IMR-90 (cell line): ENCODE measurements at regions of chr6 and their contacts with region 1.

Region 1: GRCh38 chr6:143928853-143929252 is 64.6 kb downstream of the ZC2HC1B start:
- DNase-seq: no peak
- ATAC-seq: no peak
- H3K4me3 ChIP-seq: no peak overlapping the region
- H3K27ac ChIP-seq: no peak overlapping the region
- H3K4me1 ChIP-seq: no peaks in the 10 kb centered on the region
- H3K27me3 ChIP-seq: no peaks in the 10 kb centered on the region
- CTCF ChIP-seq: no peak
- POLR2A ChIP-seq: no peak
- RAD21 ChIP-seq: no peak

Region 2: DNA sequence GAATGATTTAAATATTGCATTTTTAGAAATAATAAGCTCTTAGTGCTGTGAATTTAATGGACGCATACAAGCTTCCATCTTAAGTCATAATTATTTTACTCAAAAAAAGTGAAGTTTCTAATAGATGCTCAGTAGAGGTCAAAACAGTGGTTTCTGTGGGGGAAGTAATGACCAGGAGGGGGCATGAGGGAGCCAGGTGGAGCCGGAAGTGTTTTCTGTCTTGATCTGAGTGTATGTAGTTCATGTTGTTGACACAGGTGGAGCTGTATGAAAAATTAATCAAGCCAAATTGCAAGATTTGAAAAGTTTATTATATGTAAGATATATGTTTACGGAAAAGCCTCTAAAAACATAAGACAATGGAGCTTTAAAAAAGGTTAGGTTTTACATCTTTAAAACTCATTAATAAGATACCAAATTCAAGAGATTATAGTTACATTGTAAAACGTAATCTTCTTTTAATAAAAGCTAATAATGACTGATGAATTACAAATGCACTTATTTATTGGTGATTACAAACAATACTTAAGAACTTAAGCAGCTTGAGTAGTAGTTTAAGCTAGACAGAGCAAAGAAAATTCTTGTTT is 11.3 kb after region 1 on chr6:
- CTCF ChIA-PET with region 1: interaction called, 6 read pairs
- POLR2A ChIA-PET with region 1: interaction called, 18 read pairs
- dilution Hi-C with region 1: no loop called
- in situ Hi-C with region 1: no loop called
- intact Hi-C with region 1: no loop called
- DNase-seq: peak; percentile 38
- ATAC-seq: peak; percentile 56; the same call in 1 of the 2 replicates
- H3K4me3 ChIP-seq: no peak overlapping the region
- H3K27ac ChIP-seq: no peak overlapping the region
- H3K4me1 ChIP-seq: no peaks in the 10 kb centered on the region
- H3K27me3 ChIP-seq: peaks cover 4% of the 10 kb centered on the region
- CTCF ChIP-seq: peak; percentile 55
- POLR2A ChIP-seq: no peak
- RAD21 ChIP-seq: peak; percentile 53